Activated T-helper 1 cell treated with anti-CD3 and anti-CD28 coated beads, Interleukin-12 subunit alpha, Interleukin-12 subunit beta, Interleukin-2, Interleukin-4 antibody, amounts not matched to agents 30 ng/mL and 10 ng/mL and 1 ng/mL, durations not matched to agents 14 hours and 24 hours and 36 hours (primary cell): ENCODE measurements at regions of chr17 and their contacts with region 1.

Region 1: DNA sequence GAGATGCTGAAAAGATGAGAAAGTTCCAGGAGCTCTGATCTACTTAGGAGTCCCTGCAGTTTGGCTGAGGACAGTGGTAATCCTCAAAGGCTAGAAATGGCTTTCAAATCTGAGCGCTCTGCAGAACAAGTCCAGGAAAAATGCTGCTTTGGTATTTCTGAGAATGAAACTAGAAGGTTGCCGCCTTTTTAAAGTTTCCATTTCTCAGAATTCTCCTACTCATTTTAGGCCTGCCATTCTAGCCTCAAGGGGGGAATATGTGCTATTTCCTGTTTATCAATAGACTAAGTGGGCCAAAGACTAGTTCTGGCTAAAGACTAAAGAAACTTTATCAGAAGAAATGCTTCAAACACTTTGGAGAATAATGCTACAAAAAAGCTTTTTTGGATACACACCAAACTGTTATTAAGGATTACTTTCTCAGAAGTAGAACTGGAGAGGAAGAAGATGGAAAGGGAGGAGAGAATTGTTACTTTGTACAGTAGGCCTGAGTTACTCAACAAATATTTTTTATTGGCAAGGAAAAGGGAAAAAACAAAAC is at the start of gene SLFN12L:
- DNase-seq: peak; percentile 61
- H3K4me3 Mint-ChIP-seq: peak within 1 kb of the TSS; percentile 85
- H3K27ac Mint-ChIP-seq: peak within 1 kb of the TSS; percentile 100
- H3K4me1 Mint-ChIP-seq: peaks cover 54% of the 10 kb centered on the region
- H3K27me3 Mint-ChIP-seq: no peaks in the 10 kb centered on the region
- total RNA-seq, gene SLFN12L: 45.2 and 49.3 TPM in 2 replicates

Region 2: DNA sequence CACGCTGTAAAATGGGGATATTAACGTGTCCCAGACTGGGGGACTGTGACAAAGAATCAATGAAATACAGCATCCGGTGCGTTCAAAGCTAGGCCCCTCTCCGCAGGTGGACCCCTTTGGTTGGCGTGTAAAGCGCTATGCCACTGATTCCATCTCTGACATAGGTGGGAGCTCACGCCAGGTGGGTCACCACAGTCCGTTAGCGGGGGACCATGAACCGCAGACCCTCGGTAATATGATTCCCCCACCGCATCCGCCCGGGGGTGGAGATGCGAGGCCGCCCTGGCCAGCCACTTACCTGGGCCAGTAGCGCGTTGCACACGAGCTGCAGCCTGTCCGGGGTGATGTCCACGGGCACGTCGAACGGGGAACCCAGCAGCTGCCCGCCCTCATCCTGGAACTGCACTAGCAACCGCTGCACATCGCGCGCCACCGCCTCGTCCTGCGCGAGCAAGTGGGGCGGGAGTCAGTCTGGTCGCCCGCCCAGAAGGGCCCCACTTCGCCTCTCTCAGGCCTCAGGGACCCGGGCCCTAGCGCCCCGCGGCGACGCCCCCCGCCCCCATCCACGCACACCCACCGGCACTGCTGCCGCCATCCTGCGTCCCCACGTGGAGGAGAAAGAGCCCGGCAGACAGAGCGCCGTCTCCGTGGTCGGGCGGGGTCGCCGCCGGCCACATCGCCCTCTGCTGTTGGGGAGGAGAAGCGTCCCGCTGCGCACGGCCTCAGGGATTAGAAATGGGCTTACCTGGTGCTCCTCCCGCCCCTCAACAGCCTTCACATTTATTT is 395.8 kb before region 1 on chr17 and contains the start of gene NLE1:
- intact Hi-C with region 1: loop called (anchors 2 kb)
- DNase-seq: peak; percentile 85
- H3K4me3 Mint-ChIP-seq: peak within 1 kb of the TSS; percentile 86
- H3K27ac Mint-ChIP-seq: peak within 1 kb of the TSS; percentile 80
- H3K4me1 Mint-ChIP-seq: no peaks in the 10 kb centered on the region
- H3K27me3 Mint-ChIP-seq: no peaks in the 10 kb centered on the region
- total RNA-seq, gene NLE1: 51.1 and 54.4 TPM in 2 replicates

Region 3: GRCh38 chr17:35312790-35313711 is 224.6 kb before region 1 on chr17:
- intact Hi-C with region 1: loop called (anchors 1 kb)
- DNase-seq: peak; percentile 78
- H3K4me3 Mint-ChIP-seq: peak overlapping the region; percentile 81
- H3K27ac Mint-ChIP-seq: peak overlapping the region; percentile 88
- H3K4me1 Mint-ChIP-seq: peaks cover 45% of the 10 kb centered on the region
- H3K27me3 Mint-ChIP-seq: peaks cover 2% of the 10 kb centered on the region

Region 4: DNA sequence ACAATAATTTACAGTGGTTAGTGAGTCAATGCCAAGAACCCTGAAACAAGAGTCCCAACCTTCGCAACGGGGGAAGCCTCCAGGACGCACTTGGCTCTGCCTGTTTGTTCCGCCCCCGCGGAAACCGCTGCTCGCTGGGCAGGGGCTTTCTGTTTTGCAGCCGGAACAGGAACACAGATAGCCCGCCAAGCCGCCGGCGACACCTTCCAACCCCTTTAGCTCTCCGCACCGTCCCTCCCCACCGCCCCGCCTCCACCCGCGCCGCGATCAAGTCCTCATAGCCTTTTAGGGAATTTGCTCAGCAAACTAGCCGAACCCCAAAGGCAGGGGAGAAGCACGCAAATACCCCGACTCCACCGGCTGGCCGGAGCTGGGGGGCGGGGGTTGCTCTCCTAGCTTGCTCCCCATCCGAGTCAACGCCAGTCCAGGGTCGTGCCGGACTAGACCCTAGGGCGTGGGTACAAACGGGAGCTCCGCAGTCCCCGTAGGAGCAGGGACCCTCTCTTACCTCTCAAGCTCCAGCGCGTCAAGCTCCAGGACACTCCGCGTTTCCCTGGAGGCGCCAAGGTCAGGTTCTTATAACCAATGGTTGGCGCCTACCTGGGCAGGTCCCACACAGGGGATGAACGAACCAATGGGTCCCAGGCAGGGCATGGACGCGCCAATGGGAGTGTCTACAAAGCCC is 89.3 kb before region 1 on chr17 and contains the start of gene SLFN13:
- intact Hi-C with region 1: loop called (anchors 1 kb)
- DNase-seq: peak; percentile 84
- H3K4me3 Mint-ChIP-seq: peak within 1 kb of the TSS; percentile 67
- H3K27ac Mint-ChIP-seq: peak within 1 kb of the TSS; percentile 66
- H3K4me1 Mint-ChIP-seq: peaks cover 27% of the 10 kb centered on the region
- H3K27me3 Mint-ChIP-seq: no peaks in the 10 kb centered on the region
- total RNA-seq, gene SLFN13: 32.2 and 32.7 TPM in 2 replicates

Region 5: DNA sequence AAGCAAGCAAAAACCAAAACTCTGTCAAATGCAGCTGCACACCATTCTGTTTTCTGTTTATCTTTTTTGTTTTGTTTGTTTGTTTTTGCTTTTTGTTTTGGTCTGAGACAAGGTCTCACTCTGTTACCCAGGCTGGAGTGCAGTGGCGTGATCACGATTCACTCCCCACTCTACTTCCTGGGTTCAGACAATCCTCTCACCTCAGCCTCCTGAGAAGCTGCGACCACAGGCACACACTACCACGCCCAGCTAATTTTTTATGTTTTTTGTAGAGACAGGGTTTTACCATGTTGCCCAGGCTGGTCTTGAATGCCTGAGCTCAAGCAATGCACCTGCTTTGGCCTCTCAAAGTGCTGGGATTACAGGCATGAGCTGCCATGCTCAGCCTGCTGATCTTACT is 69.8 kb before region 1 on chr17:
- intact Hi-C with region 1: no loop called
- DNase-seq: peak; percentile 40
- H3K4me3 Mint-ChIP-seq: peak overlapping the region; percentile 38
- H3K27ac Mint-ChIP-seq: peak overlapping the region; percentile 55
- H3K4me1 Mint-ChIP-seq: peaks cover 33% of the 10 kb centered on the region
- H3K27me3 Mint-ChIP-seq: no peaks in the 10 kb centered on the region

Region 6: DNA sequence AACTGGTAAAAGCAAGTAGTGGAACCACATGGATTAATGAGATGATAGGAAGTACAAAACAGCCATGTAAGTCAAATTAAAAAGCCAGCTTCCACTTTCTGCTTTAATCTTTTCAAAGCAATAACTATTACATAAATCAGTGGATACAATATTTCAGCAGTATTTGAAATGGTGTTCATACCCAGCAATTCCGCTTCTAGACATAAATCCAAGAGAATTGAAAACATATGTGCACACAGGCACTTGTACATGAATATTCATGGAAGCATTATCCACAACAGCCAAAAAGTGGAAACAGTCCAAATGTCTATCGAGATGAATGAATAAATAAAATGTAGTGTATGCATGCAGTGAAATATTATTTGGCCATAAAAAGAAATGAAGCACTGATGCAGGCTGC is 27.6 kb before region 1 on chr17:
- intact Hi-C with region 1: no loop called
- DNase-seq: no peak
- H3K4me3 Mint-ChIP-seq: no peak overlapping the region
- H3K27ac Mint-ChIP-seq: peak overlapping the region; percentile 8
- H3K4me1 Mint-ChIP-seq: peaks cover 38% of the 10 kb centered on the region
- H3K27me3 Mint-ChIP-seq: no peaks in the 10 kb centered on the region

Region 7: DNA sequence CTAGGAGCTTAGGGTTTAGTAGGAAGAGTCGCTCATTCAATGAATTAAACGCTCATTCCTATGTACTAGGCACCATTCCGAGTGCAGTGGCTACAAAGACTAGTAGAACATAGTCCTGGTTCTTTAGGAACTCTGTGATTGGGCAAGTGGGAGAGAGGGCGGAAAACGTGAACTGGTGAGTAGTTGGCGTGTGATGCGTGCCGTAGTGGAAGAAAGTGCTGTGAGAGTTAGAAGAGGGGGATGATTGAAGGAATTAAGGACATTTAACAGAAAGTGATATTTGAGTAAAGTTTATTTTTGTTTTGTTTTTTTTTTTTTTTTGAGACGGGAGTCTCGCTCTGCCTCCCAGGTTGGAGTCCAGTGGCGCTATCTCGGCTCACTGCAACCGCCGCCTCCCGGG is 30.9 kb after region 1 on chr17:
- intact Hi-C with region 1: loop called (anchors 1 kb)
- DNase-seq: no peak
- H3K4me3 Mint-ChIP-seq: peak overlapping the region; percentile 85
- H3K27ac Mint-ChIP-seq: peak overlapping the region; percentile 79
- H3K4me1 Mint-ChIP-seq: peaks cover 28% of the 10 kb centered on the region
- H3K27me3 Mint-ChIP-seq: peaks cover 8% of the 10 kb centered on the region

Region 8: GRCh38 chr17:35747540-35748017 is 209.9 kb after region 1 on chr17:
- intact Hi-C with region 1: loop called (anchors 1 kb)
- DNase-seq: peak; percentile 64
- H3K4me3 Mint-ChIP-seq: no peak overlapping the region
- H3K27ac Mint-ChIP-seq: no peak overlapping the region
- H3K4me1 Mint-ChIP-seq: peaks cover 13% of the 10 kb centered on the region
- H3K27me3 Mint-ChIP-seq: peaks cover 37% of the 10 kb centered on the region